ENCODE measurements at regions of chr14 and their contacts with region 1.

Region 1: DNA sequence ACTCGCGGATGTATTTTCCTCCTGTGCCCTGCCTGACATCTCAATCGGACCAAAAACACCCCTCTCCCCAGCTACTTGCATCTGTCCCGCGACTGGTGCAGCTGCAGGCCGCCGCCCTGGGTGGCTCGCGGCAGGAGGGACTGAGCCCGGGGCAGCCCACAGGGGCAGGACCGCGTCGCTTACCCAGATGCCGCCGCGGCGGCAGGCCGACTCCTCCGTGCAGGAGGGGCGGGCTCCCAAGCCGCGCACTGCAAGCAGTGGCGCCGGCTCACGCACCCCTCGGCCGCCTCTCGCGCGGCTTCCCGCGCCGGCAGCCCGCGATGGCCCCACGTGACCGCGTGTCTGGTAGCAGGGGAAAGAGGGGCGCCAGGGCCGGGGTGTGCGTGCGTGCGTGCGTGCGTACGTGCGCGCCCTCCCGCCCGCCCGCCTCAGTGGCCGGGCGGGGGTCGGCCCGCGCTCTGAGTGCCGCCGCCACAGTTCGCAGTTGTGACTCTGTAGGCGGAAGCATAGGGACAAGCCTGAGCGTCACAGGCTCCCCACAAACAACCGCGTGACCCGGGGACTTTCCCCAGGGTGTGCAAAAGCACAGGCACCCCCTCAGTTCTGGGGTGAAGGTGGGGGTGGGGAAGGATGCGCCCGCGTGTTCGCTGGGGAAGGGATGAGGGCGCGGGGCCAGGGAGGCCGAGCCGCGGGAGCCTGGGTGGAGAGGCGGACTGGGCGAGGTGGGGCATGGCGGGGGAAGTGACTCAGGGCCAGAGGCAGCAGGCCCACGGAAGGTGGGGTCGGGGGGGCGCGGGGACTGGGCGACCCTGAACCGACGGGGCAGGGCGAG is at the start of gene ZBTB25:
- DNase-seq: peak; percentile 93
- ATAC-seq: peak; percentile 63
- H3K4me3 ChIP-seq: peak within 1 kb of the TSS; percentile 82
- H3K27ac ChIP-seq: peak within 1 kb of the TSS; percentile 89
- H3K4me1 ChIP-seq: peaks cover 43% of the 10 kb centered on the region
- H3K27me3 ChIP-seq: no peaks in the 10 kb centered on the region
- CTCF ChIP-seq: no peak
- total RNA-seq, gene ZBTB25: 4.0 and 10.7 TPM in 2 replicates

Region 2: GRCh38 chr14:64387694-64388532 is 115.8 kb before region 1 on chr14 and contains the start of gene MTHFD1:
- CTCF ChIA-PET with region 1: no interaction called
- POLR2A ChIA-PET with region 1: interaction called, 3 read pairs
- intact Hi-C with region 1: loop called (anchors 1 kb)
- DNase-seq: peak; percentile 99
- ATAC-seq: peak; percentile 84
- H3K4me3 ChIP-seq: peak within 1 kb of the TSS; percentile 80
- H3K27ac ChIP-seq: peak within 1 kb of the TSS; percentile 48
- H3K4me1 ChIP-seq: peaks cover 11% of the 10 kb centered on the region; the same call in 1 of the 2 replicates
- H3K27me3 ChIP-seq: no peaks in the 10 kb centered on the region
- CTCF ChIP-seq: no peak
- total RNA-seq, gene MTHFD1: 89.3 and 103 TPM in 2 replicates

Region 3: GRCh38 chr14:64491637-64492036 is 12.1 kb before region 1 on chr14:
- CTCF ChIA-PET with region 1: no interaction called
- POLR2A ChIA-PET with region 1: interaction called, 21 read pairs
- intact Hi-C with region 1: no loop called
- DNase-seq: no peak
- ATAC-seq: no peak
- H3K4me3 ChIP-seq: no peak overlapping the region
- H3K27ac ChIP-seq: no peak overlapping the region
- H3K4me1 ChIP-seq: no peaks in the 10 kb centered on the region
- H3K27me3 ChIP-seq: no peaks in the 10 kb centered on the region
- CTCF ChIP-seq: no peak

Region 4: DNA sequence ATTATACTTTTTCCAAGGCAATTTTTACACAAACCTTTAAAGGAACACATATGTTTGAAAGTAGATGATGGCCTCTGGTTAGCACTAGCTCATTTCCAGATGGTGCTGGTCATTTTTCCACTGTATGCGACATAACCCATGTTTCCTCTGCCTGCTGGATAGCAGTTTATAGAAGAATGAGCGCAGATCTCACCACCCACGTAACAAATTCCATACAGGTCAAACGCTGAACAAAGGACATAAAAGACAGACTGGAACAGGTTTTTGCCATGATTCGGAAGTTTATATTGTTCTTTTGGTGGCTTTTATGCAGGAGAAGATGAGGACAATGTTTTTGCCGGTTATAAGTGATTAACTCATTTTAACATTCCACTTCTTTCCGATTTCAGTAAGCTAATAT is 76.8 kb after region 1 on chr14:
- CTCF ChIA-PET with region 1: no interaction called
- POLR2A ChIA-PET with region 1: no interaction called
- intact Hi-C with region 1: no loop called
- DNase-seq: no peak
- ATAC-seq: no peak
- H3K4me3 ChIP-seq: no peak overlapping the region
- H3K27ac ChIP-seq: no peak overlapping the region
- H3K4me1 ChIP-seq: no peaks in the 10 kb centered on the region
- H3K27me3 ChIP-seq: no peaks in the 10 kb centered on the region
- CTCF ChIP-seq: no peak

Region 5: GRCh38 chr14:64612021-64612380 is 108.3 kb after region 1 on chr14:
- CTCF ChIA-PET with region 1: no interaction called
- POLR2A ChIA-PET with region 1: no interaction called
- intact Hi-C with region 1: loop called (anchors 5 kb)
- DNase-seq: peak; percentile 53
- ATAC-seq: peak; percentile 57
- H3K4me3 ChIP-seq: no peak overlapping the region
- H3K27ac ChIP-seq: peak overlapping the region; percentile 43
- H3K4me1 ChIP-seq: peaks cover 30% of the 10 kb centered on the region
- H3K27me3 ChIP-seq: no peaks in the 10 kb centered on the region
- CTCF ChIP-seq: no peak

Region 6: DNA sequence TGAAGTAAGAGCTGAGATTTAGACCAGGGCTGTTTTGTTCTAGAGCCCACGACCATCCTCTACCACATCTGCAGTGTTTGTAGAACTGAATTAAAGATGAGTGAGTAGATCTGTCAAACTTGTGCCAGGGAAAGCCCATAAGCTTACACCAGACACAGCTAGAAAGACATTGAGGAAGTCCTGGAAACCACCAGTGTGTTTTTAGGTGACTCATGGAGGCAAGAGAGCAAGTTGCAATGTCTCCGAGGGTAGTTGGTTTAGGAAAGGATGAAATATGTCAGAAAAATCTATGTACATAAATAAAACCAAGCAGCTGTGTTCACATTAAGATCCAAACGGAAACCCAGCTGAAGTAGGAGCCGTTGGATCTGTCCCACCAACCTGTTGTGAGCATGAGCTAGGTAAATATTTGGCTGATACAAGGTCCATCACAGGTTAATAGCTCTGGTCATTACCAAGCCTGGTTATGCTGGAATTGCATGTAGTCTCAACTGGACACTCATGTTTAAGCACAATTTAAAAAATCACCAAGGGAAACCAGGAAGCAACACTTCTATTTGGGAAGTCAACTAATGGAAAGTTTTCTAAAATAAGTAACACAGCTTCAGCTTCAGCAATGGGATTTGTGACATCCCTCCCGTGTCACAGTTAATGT is 150.7 kb after region 1 on chr14:
- CTCF ChIA-PET with region 1: no interaction called
- POLR2A ChIA-PET with region 1: interaction called, 53 read pairs
- intact Hi-C with region 1: no loop called
- DNase-seq: peak; percentile 90
- ATAC-seq: peak; percentile 98
- H3K4me3 ChIP-seq: peak overlapping the region; percentile 6; the same call in 1 of the 2 replicates
- H3K27ac ChIP-seq: peak overlapping the region; percentile 68
- H3K4me1 ChIP-seq: peaks cover 17% of the 10 kb centered on the region
- H3K27me3 ChIP-seq: no peaks in the 10 kb centered on the region
- CTCF ChIP-seq: no peak

Region 7: DNA sequence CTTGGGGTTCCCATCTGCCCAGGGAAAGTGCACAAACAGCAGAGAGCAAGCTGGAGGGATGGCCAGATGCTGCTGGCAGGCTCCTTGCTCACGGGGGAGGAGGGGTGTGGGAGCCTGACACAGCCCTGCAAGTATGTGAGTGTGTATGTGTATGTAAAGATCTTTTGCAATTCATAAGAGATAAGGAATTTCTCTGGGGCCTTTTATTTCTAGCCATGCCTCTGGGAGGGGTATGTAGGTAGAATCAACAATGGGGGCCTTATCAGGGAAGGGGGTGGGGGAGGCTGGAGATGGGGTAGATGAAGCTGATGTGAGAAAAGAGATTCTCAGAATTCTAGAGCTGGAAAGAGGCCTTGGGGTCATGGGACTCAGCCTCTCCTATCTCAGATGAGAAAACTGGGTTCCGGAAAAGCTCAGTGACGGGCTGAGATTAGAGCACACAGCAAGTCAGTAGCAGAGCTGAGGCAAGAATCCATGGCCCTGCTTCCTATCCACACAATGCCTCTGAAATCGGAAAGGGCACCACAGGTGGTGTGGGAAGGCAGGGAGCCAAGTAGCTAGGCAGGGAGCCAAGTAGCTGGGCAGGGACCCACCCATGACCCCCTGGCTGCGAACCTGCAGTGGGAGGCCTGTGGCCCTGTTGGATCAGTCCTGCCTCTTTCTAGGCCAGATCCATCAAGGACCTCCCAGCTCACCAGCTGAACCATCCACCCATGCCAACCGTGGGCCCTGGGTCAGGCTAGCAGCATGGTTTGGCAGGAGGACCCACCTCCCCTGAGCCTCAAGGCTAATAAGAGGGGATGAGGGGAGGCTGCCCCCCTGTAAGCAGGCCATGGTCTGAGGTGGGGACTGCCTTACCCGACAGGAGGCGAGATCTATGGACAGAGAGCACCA is 255.2 kb after region 1 on chr14:
- CTCF ChIA-PET with region 1: no interaction called
- POLR2A ChIA-PET with region 1: no interaction called
- intact Hi-C with region 1: loop called (anchors 1 kb)
- DNase-seq: peak; percentile 82
- ATAC-seq: peak; percentile 47
- H3K4me3 ChIP-seq: no peak overlapping the region; the same call in 1 of the 2 replicates
- H3K27ac ChIP-seq: peak overlapping the region; percentile 87
- H3K4me1 ChIP-seq: peaks cover 78% of the 10 kb centered on the region
- H3K27me3 ChIP-seq: no peaks in the 10 kb centered on the region
- CTCF ChIP-seq: no peak

Region 8: DNA sequence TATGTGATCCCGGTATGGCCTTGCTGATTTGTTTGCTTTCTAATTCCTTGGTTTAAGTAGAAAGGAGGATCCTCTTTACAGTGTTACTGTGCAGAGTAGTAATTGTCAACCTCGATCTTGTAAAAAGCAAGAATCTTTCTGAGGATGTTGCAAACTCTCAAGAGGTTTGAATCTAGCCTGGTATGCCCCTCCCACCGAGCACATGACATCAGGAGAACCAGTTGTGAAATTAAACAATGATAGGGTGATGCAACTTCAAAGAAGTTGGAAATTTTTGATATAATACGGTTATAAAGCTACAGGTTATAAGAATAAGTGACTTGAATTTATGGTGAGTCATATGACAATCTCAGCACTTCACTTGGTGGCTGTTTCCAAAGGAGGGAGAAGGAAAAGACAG is 873.9 kb after region 1 on chr14:
- CTCF ChIA-PET with region 1: no interaction called
- POLR2A ChIA-PET with region 1: no interaction called
- intact Hi-C with region 1: no loop called
- DNase-seq: no peak
- ATAC-seq: no peak
- H3K4me3 ChIP-seq: no peak overlapping the region
- H3K27ac ChIP-seq: no peak overlapping the region
- H3K4me1 ChIP-seq: no peaks in the 10 kb centered on the region
- H3K27me3 ChIP-seq: no peaks in the 10 kb centered on the region
- CTCF ChIP-seq: no peak

Region 9: GRCh38 chr14:66009089-66009488 is 1505.4 kb after region 1 on chr14:
- CTCF ChIA-PET with region 1: no interaction called
- POLR2A ChIA-PET with region 1: interaction called, 16 read pairs
- intact Hi-C with region 1: no loop called
- DNase-seq: peak; percentile 55
- ATAC-seq: peak; percentile 73; the same call in 1 of the 2 replicates
- H3K4me3 ChIP-seq: no peak overlapping the region
- H3K27ac ChIP-seq: no peak overlapping the region
- H3K4me1 ChIP-seq: no peaks in the 10 kb centered on the region
- H3K27me3 ChIP-seq: no peaks in the 10 kb centered on the region
- CTCF ChIP-seq: no peak